ENCODE measurements at regions of chr22 and their contacts with region 1.

Region 1: GRCh38 chr22:30254314-30254713 is 7.8 kb upstream of the LIF start:
- DNase-seq: no peak
- H3K27ac ChIP-seq: no peak overlapping the region
- CTCF ChIP-seq: no peak

Region 2: GRCh38 chr22:30104501-30105156 is 149.7 kb before region 1 on chr22:
- CTCF ChIA-PET with region 1: interaction called, 22 read pairs
- POLR2A ChIA-PET with region 1: no interaction called
- DNase-seq: no peak
- H3K27ac ChIP-seq: no peak overlapping the region
- CTCF ChIP-seq: no peak

Region 3: DNA sequence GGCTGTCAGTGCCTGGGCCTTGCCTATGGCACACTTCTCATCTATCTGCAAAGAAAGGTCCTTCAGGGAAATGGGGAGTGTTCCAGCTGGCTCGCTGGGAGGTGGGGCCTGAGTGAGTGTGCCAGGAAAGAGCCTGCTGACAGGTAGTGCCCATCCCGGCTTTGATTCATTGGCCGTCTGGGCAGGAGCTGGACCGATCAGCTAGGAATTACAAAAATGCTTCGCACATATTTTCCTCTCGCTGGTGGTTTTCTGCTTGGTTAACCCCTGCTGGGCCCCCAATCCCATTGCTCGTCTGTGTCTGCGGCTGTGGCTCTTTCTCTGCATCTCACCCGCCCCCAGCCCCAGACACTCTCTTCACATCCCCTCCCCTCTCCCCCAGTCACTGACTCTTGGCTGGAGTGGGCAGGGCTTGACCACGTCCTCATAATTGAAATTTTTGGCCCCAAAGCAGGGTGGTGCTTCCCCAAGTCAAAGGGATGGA is 18.6 kb before region 1 on chr22:
- CTCF ChIA-PET with region 1: no interaction called
- POLR2A ChIA-PET with region 1: no interaction called
- DNase-seq: peak; percentile 63
- H3K27ac ChIP-seq: peak overlapping the region; percentile 73
- CTCF ChIP-seq: no peak

Measured in RWPE1 (cell line).